ENCODE measurements at regions of chr1 and their contacts with region 1.

Region 1: DNA sequence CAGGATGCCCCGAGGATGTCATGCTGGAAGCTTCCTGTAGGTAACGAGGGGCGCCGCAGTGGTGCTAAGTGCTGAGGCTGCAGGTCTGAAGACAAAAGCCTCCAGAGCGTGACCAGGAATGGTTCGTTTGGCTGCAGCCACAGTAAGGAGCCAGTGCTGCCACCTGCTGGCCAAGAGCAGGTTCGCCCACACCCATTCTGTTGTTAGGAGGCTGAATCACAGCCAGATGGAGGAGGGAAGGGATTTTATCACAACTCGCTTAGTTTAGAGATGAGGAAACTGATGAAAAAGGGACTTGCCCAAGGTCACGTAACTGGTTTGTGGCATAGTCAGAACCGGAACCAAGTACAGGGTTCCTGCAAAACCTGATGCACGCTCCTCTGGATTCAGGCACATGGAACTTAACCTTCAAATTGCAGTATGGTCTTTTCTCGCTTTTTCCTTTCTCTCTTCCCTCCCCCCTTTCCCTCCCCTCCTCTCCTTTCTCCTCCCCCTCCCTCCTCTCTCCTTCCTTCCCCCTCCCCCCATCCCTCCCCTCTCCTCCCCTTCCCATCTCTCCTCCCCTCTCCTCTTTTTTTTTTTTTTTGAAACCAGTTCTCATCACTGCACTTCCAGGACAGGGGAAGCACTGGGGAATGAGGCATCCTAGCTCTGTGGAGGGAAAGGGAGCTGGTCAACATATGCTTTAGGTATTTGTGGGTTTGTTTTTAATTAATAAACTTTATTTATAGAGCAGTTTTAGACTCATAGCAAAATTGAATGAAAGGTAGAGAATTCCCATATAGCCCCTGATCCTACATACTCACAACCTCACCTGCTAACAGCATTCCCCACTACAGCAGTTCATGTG is 81.8 kb downstream of the MPZL1 start:
- DNase-seq: peak; percentile 89
- H3K4me3 ChIP-seq: no peak overlapping the region
- H3K27ac ChIP-seq: no peak overlapping the region
- H3K27me3 ChIP-seq: no peaks in the 10 kb centered on the region
- CTCF ChIP-seq: peak; percentile 96

Region 2: DNA sequence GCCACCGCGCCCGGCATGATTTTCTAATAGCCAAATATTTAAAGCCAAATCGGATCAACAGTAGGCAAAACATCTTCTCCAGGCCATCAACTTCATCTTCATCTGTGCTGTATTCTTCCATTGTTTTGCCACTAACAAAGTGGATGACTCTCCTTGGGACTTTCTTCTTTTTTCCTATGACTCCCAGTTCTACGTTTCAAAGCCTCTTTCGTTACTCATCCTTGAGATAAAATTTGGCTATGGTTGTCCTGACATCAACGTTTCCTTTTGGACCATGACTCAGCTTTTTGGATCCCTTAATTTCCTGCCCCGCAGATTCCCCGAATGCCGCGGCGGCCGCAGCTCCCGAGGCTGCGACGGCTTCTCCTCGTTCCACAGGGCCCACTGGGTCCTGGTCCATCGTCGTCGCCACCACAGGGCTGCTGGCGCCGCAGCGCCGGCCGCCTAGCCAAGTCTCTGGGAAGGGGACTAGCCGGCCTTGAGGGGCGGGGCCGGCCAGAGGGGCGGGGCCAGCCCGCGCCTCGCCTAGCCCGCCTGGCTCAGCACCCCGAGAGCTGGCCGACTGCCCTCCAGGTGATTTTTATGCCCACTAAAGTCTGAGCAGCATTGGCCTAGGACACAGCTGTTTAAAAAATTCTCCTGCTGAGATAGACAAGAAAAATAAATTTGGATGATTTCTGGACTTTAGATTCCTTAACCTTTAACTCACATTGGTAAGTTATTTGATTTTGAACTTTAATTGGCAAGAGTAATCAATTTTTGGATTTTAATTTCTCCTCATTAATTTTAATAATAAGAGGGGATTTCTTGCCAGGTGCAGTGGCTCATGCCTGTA is 16.5 kb after region 1 on chr1:
- CTCF ChIA-PET with region 1: interaction called, 15 read pairs
- POLR2A ChIA-PET with region 1: no interaction called
- DNase-seq: peak; percentile 63
- H3K4me3 ChIP-seq: peak overlapping the region; percentile 37; the same call in 1 of the 2 replicates
- H3K27ac ChIP-seq: peak overlapping the region; percentile 90
- H3K27me3 ChIP-seq: no peaks in the 10 kb centered on the region
- CTCF ChIP-seq: no peak